ENCODE measurements at regions of chr5 and their contacts with region 1.

Region 1: DNA sequence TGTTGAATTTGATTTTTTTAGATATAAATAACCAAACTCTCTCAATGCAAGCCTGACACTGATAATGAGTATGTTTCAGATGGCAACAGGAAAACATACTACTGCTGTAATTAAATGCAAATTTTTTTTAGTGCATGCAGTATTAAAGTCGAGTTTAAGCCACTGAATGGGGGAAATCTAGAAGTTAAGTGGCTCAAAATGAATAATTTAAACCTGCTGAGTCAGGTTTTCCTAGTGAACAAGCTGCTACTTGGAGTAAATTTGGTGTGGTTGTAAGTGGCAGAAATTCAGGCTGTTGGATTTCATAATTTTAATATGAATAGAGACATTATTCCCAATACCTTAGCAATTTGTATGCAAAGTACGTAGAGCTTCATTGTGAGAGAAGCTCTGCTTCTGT is 121.8 kb downstream of the SLF1 start:
- DNase-seq: no peak
- H3K4me3 ChIP-seq: no peak overlapping the region
- H3K4me3 Mint-ChIP-seq: no peak overlapping the region
- H3K27ac Mint-ChIP-seq: no peak overlapping the region
- H3K4me1 ChIP-seq: no peaks in the 10 kb centered on the region
- H3K4me1 Mint-ChIP-seq: peaks cover 6% of the 10 kb centered on the region
- H3K27me3 ChIP-seq: no peaks in the 10 kb centered on the region
- H3K27me3 Mint-ChIP-seq: peaks cover 3% of the 10 kb centered on the region
- CTCF ChIP-seq: no peak

Region 2: GRCh38 chr5:94551858-94552257 is 188.4 kb before region 1 on chr5:
- CTCF ChIA-PET with region 1: no interaction called
- POLR2A ChIA-PET with region 1: no interaction called
- intact Hi-C with region 1: no loop called
- DNase-seq: no peak
- H3K4me3 ChIP-seq: no peak overlapping the region
- H3K4me3 Mint-ChIP-seq: no peak overlapping the region
- H3K27ac Mint-ChIP-seq: no peak overlapping the region
- H3K4me1 ChIP-seq: no peaks in the 10 kb centered on the region
- H3K4me1 Mint-ChIP-seq: no peaks in the 10 kb centered on the region
- H3K27me3 ChIP-seq: no peaks in the 10 kb centered on the region
- H3K27me3 Mint-ChIP-seq: peaks cover 4% of the 10 kb centered on the region
- CTCF ChIP-seq: no peak

Region 3: DNA sequence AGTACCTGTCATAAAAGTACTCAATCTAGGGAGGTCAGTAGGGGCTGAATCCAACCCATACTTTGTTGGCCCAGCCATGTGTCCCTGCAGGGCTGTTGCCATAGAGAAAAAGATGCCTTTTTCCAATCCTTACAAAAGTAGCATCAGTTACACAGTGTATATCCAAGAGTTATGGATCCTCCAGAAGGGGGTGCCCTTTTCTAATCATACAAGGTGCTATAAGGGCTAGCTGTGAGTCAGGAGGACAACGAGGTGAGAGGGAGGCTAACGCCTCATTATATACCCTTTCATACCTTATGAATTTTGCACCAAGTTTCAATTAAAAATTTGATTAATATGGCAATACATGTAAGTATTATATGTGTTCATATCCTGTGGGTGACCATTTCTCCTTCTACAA is 126.7 kb before region 1 on chr5:
- CTCF ChIA-PET with region 1: interaction called, 8 read pairs
- POLR2A ChIA-PET with region 1: no interaction called
- intact Hi-C with region 1: loop called (anchors 1 kb)
- DNase-seq: peak in 1 of 2 experiments; percentile 35
- H3K4me3 ChIP-seq: no peak overlapping the region
- H3K4me3 Mint-ChIP-seq: no peak overlapping the region
- H3K27ac Mint-ChIP-seq: no peak overlapping the region
- H3K4me1 ChIP-seq: peaks cover 10% of the 10 kb centered on the region; the same call in 1 of the 2 replicates
- H3K4me1 Mint-ChIP-seq: no peaks in the 10 kb centered on the region
- H3K27me3 ChIP-seq: no peaks in the 10 kb centered on the region
- H3K27me3 Mint-ChIP-seq: no peaks in the 10 kb centered on the region
- CTCF ChIP-seq: peak in 1 of 2 experiments; percentile 33

Region 4: GRCh38 chr5:94618493-94619328 is 121.6 kb before region 1 on chr5 and contains the starts of genes KIAA0825 and SLF1:
- CTCF ChIA-PET with region 1: interaction called, 8 read pairs
- POLR2A ChIA-PET with region 1: no interaction called
- intact Hi-C with region 1: loop called (anchors 1 kb)
- DNase-seq: peak; percentile 89
- H3K4me3 ChIP-seq: peak within 1 kb of the TSS; percentile 82
- H3K4me3 Mint-ChIP-seq: peak within 1 kb of the TSS; percentile 82
- H3K27ac Mint-ChIP-seq: peak within 1 kb of the TSS; percentile 96
- H3K4me1 ChIP-seq: peaks cover 10% of the 10 kb centered on the region; the same call in 1 of the 2 replicates
- H3K4me1 Mint-ChIP-seq: no peaks in the 10 kb centered on the region
- H3K27me3 ChIP-seq: no peaks in the 10 kb centered on the region
- H3K27me3 Mint-ChIP-seq: no peaks in the 10 kb centered on the region
- CTCF ChIP-seq: no peak
- total RNA-seq, gene KIAA0825: 0.26 and 0.50 TPM in 2 replicates
- total RNA-seq, gene SLF1: 7.9 and 11.7 TPM in 2 replicates

Region 5: GRCh38 chr5:94674490-94675382 is 65.5 kb before region 1 on chr5:
- CTCF ChIA-PET with region 1: no interaction called
- POLR2A ChIA-PET with region 1: no interaction called
- intact Hi-C with region 1: no loop called
- DNase-seq: no peak
- H3K4me3 ChIP-seq: no peak overlapping the region
- H3K4me3 Mint-ChIP-seq: no peak overlapping the region
- H3K27ac Mint-ChIP-seq: no peak overlapping the region
- H3K4me1 ChIP-seq: no peaks in the 10 kb centered on the region
- H3K4me1 Mint-ChIP-seq: no peaks in the 10 kb centered on the region
- H3K27me3 ChIP-seq: no peaks in the 10 kb centered on the region
- H3K27me3 Mint-ChIP-seq: no peaks in the 10 kb centered on the region
- CTCF ChIP-seq: no peak

Region 6: GRCh38 chr5:94693043-94693822 is 47.1 kb before region 1 on chr5:
- CTCF ChIA-PET with region 1: interaction called, 3 read pairs
- POLR2A ChIA-PET with region 1: no interaction called
- intact Hi-C with region 1: loop called (anchors 2 kb)
- DNase-seq: peak in 1 of 2 experiments; percentile 19
- H3K4me3 ChIP-seq: no peak overlapping the region
- H3K4me3 Mint-ChIP-seq: no peak overlapping the region
- H3K27ac Mint-ChIP-seq: no peak overlapping the region
- H3K4me1 ChIP-seq: no peaks in the 10 kb centered on the region
- H3K4me1 Mint-ChIP-seq: no peaks in the 10 kb centered on the region
- H3K27me3 ChIP-seq: no peaks in the 10 kb centered on the region
- H3K27me3 Mint-ChIP-seq: no peaks in the 10 kb centered on the region
- CTCF ChIP-seq: peak; percentile 38 to 49

Region 7: DNA sequence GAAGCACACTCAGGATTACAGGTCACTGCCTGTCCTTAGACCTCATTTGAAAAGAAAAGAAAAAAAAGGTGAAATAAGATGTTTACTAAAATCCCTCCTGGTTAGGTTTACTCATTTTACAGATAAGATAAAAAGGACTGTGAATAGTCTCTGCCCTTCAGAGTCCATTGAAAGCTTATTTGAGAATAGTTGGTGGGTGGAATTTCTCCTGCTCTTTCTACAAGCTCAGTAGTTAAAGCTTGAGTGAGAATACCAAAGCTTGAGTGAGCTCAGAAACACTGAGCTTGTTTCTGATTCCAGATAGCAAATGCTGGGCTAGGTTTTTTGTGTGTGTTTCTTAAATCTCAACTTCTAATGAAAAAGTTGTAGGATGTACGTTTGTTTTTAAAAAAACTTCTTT is 15.1 kb before region 1 on chr5:
- CTCF ChIA-PET with region 1: interaction called, 11 read pairs
- POLR2A ChIA-PET with region 1: no interaction called
- intact Hi-C with region 1: no loop called
- DNase-seq: peak in 1 of 2 experiments; percentile 12
- H3K4me3 ChIP-seq: no peak overlapping the region
- H3K4me3 Mint-ChIP-seq: peak overlapping the region; percentile 66
- H3K27ac Mint-ChIP-seq: peak overlapping the region; percentile 73
- H3K4me1 ChIP-seq: peaks cover 19% of the 10 kb centered on the region
- H3K4me1 Mint-ChIP-seq: peaks cover 14% of the 10 kb centered on the region
- H3K27me3 ChIP-seq: no peaks in the 10 kb centered on the region
- H3K27me3 Mint-ChIP-seq: no peaks in the 10 kb centered on the region
- CTCF ChIP-seq: no peak

Region 8: GRCh38 chr5:94761786-94762185 is 21.5 kb after region 1 on chr5:
- CTCF ChIA-PET with region 1: no interaction called
- POLR2A ChIA-PET with region 1: no interaction called
- intact Hi-C with region 1: no loop called
- DNase-seq: no peak
- H3K4me3 ChIP-seq: no peak overlapping the region
- H3K4me3 Mint-ChIP-seq: no peak overlapping the region
- H3K27ac Mint-ChIP-seq: no peak overlapping the region
- H3K4me1 ChIP-seq: no peaks in the 10 kb centered on the region
- H3K4me1 Mint-ChIP-seq: no peaks in the 10 kb centered on the region
- H3K27me3 ChIP-seq: no peaks in the 10 kb centered on the region
- H3K27me3 Mint-ChIP-seq: peaks cover 4% of the 10 kb centered on the region
- CTCF ChIP-seq: no peak

Region 9: DNA sequence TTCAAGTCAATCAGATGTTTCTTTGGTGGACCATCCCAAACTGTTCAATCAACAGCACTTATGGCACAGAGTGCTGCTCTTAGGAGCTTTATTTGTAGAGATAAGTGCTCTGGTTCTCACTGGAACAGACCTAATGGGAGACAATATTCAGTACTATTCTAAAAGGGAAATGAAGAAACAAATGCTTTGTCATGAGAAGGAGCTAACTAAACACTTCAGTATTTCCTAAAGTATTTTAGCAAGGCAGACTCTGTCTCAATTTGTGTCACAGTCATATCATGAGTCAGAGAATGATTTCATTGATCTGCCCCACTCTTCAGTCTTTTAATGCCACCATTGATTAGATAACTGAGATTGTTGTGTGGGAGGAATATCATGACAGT is 53.5 kb after region 1 on chr5:
- CTCF ChIA-PET with region 1: no interaction called
- POLR2A ChIA-PET with region 1: no interaction called
- intact Hi-C with region 1: no loop called
- DNase-seq: no peak
- H3K4me3 ChIP-seq: no peak overlapping the region
- H3K4me3 Mint-ChIP-seq: no peak overlapping the region
- H3K27ac Mint-ChIP-seq: no peak overlapping the region
- H3K4me1 ChIP-seq: no peaks in the 10 kb centered on the region
- H3K4me1 Mint-ChIP-seq: no peaks in the 10 kb centered on the region
- H3K27me3 ChIP-seq: no peaks in the 10 kb centered on the region
- H3K27me3 Mint-ChIP-seq: peaks cover 4% of the 10 kb centered on the region
- CTCF ChIP-seq: no peak